T-cell (primary cell): ENCODE measurements at regions of chr2 and their contacts with region 1.

Region 1: GRCh38 chr2:136281281-136282114 is 163.5 kb upstream of the CXCR4 start:
- DNase-seq: peak; percentile 18 to 88 (median 64)
- ATAC-seq: peak; percentile 77 to 90 (median 79)
- H3K4me3 ChIP-seq: no peak overlapping the region
- H3K4me3 Mint-ChIP-seq: peak overlapping the region; percentile 21 to 74 (median 31)
- H3K27ac ChIP-seq: peak overlapping the region; percentile 81
- H3K27ac Mint-ChIP-seq: peak overlapping the region; percentile 95
- H3K4me1 ChIP-seq: peaks cover 13 to 24% of the 10 kb centered on the region in 2 experiments
- H3K4me1 Mint-ChIP-seq: peaks cover 44 to 65% (median 47%) of the 10 kb centered on the region in 3 donors
- H3K27me3 ChIP-seq: no peaks in the 10 kb centered on the region
- H3K27me3 Mint-ChIP-seq: no peaks in the 10 kb centered on the region

Region 2: DNA sequence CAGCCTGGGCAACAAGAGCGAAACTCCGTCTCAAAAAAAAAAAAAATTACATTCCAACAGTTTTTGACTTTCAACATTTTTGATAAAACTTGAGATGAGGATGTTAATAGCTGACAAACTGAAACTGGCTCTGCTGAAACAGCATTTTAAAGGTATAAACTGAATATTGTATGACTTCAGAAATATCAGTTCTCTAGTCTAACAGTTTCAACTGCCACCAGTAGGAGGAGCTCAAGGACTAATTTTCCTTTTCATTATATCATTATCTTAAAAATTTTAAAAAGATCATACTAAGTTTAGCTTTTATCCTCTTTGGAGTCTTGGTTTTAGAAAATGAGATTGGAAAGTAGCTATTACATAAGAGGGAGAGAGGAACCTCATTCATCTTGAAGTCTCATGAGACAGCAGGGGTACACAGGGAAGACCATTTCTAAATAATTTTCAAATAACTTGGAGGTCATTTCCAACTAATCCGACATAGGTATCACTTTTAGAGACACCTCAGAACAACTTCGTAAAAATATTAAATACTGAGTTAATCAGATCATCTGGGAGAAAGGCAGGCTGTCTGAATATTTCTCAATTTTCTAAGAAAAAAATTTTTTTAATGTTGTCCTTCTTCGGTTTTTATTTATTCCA is 367.7 kb before region 1 on chr2:
- CTCF ChIA-PET with region 1: interaction called in 1 of 2 experiments, 10 read pairs
- POLR2A ChIA-PET with region 1: no interaction called
- DNase-seq: peak in 19 of 35 experiments; percentile 14 to 83 (median 43)
- ATAC-seq: peak in 3 of 4 experiments; percentile 47 to 56 (median 49)
- H3K4me3 ChIP-seq: no peak overlapping the region
- H3K4me3 Mint-ChIP-seq: no peak overlapping the region
- H3K27ac ChIP-seq: no peak overlapping the region
- H3K27ac Mint-ChIP-seq: peak overlapping the region in 1 of 2 donors; percentile 52
- H3K4me1 ChIP-seq: no peaks in the 10 kb centered on the region
- H3K4me1 Mint-ChIP-seq: peaks cover 0 to 10% (median 10%) of the 10 kb centered on the region in 3 donors
- H3K27me3 ChIP-seq: no peaks in the 10 kb centered on the region
- H3K27me3 Mint-ChIP-seq: no peaks in the 10 kb centered on the region

Region 3: GRCh38 chr2:136112317-136113208 is 168.9 kb before region 1 on chr2:
- CTCF ChIA-PET with region 1: no interaction called
- POLR2A ChIA-PET with region 1: interaction called in 1 of 2 experiments, 14 read pairs
- DNase-seq: peak in 2 of 35 experiments; percentile 46 to 55
- ATAC-seq: peak in 1 of 4 experiments; percentile 3
- H3K4me3 ChIP-seq: no peak overlapping the region
- H3K4me3 Mint-ChIP-seq: peak overlapping the region in 2 of 3 donors; percentile 94 to 99
- H3K27ac ChIP-seq: peak overlapping the region; percentile 6
- H3K27ac Mint-ChIP-seq: peak overlapping the region; percentile 58 to 70
- H3K4me1 ChIP-seq: peaks cover 16 to 20% of the 10 kb centered on the region in 2 experiments
- H3K4me1 Mint-ChIP-seq: peaks cover 51 to 53% (median 53%) of the 10 kb centered on the region in 3 donors
- H3K27me3 ChIP-seq: no peaks in the 10 kb centered on the region
- H3K27me3 Mint-ChIP-seq: no peaks in the 10 kb centered on the region

Region 4: GRCh38 chr2:136250131-136250530 is 31.4 kb before region 1 on chr2:
- CTCF ChIA-PET with region 1: no interaction called
- POLR2A ChIA-PET with region 1: no interaction called
- DNase-seq: no peak
- ATAC-seq: no peak
- H3K4me3 ChIP-seq: no peak overlapping the region
- H3K4me3 Mint-ChIP-seq: no peak overlapping the region
- H3K27ac ChIP-seq: no peak overlapping the region
- H3K27ac Mint-ChIP-seq: no peak overlapping the region
- H3K4me1 ChIP-seq: peaks cover 0 to 8% of the 10 kb centered on the region in 2 experiments
- H3K4me1 Mint-ChIP-seq: peaks cover 16 to 42% (median 26%) of the 10 kb centered on the region in 3 donors
- H3K27me3 ChIP-seq: no peaks in the 10 kb centered on the region
- H3K27me3 Mint-ChIP-seq: no peaks in the 10 kb centered on the region

Region 5: GRCh38 chr2:136327162-136327852 is 45.8 kb after region 1 on chr2:
- CTCF ChIA-PET with region 1: interaction called in 1 of 2 experiments, 6 read pairs
- POLR2A ChIA-PET with region 1: interaction called, 3 to 15 read pairs
- DNase-seq: peak; percentile 57 to 94 (median 82)
- ATAC-seq: peak; percentile 93 to 98 (median 96)
- H3K4me3 ChIP-seq: peak overlapping the region; percentile 29 to 41
- H3K4me3 Mint-ChIP-seq: peak overlapping the region; percentile 69 to 86 (median 75)
- H3K27ac ChIP-seq: peak overlapping the region; percentile 97
- H3K27ac Mint-ChIP-seq: peak overlapping the region; percentile 97 to 98
- H3K4me1 ChIP-seq: peaks cover 29% of the 10 kb centered on the region in 2 experiments
- H3K4me1 Mint-ChIP-seq: peaks cover 63 to 70% (median 69%) of the 10 kb centered on the region in 3 donors
- H3K27me3 ChIP-seq: no peaks in the 10 kb centered on the region
- H3K27me3 Mint-ChIP-seq: no peaks in the 10 kb centered on the region